ENCODE measurements at regions of chr17 and their contacts with region 1.

Region 1: GRCh38 chr17:77054936-77055335 is 85.8 kb upstream of the SEC14L1 start:
- DNase-seq: no peak

Region 2: GRCh38 chr17:76868176-76868668 is 186.7 kb before region 1 on chr17 and contains the start of gene MGAT5B:
- intact Hi-C with region 1: loop called (anchors 5 kb)
- DNase-seq: peak; percentile 25 to 91 (median 79)

Region 3: GRCh38 chr17:77096570-77097214 is 41.8 kb after region 1 on chr17:
- intact Hi-C with region 1: no loop called
- DNase-seq: peak in 1 of 42 donors; percentile 37

Region 4: GRCh38 chr17:77465358-77466041 is 410.6 kb after region 1 on chr17:
- intact Hi-C with region 1: no loop called
- DNase-seq: peak in 26 of 42 donors; percentile 33 to 74 (median 44)

Measured in head of caudate nucleus (tissue), 42 donors.